ENCODE measurements at regions of chr4 and their contacts with region 1.

Region 1: DNA sequence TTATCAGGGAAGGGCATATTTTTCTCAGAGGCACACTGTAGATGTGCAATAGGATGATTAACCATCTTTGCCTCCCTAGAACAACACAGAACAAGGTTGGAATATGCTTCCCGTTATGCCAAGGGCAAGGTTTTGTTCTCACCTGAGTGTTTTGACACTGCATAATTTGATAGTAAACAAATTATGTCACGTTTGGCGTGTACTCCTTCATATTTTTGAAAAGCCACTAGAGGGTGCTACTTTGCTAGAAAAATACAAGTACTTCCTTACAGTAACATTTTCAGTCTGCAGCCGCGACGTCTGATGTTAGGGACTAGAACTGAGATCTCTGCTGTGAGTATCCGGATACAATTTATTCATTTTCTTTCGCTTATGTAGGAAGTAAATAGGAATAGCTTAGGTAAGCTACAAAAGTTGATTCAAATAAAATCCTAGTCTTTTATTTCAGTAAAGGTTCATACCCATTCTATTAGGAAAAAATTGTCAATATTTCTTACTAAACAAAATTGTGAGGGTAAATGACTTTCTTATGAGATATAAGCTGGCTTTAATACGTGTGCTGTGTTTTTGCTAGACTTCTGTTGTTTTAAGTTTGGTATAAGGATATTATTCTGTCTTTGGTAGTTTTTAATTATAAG is 181.1 kb upstream of the WDFY3 start:
- DNase-seq: peak in 4 of 6 donors; percentile 17 to 53 (median 38)
- ATAC-seq: peak; percentile 89 to 97 (median 96)
- H3K4me3 ChIP-seq: no peak overlapping the region
- H3K27ac ChIP-seq: no peak overlapping the region
- H3K4me1 ChIP-seq: peaks cover 0 to 3% (median 0%) of the 10 kb centered on the region in 3 donors
- H3K27me3 ChIP-seq: no peaks in the 10 kb centered on the region
- CTCF ChIP-seq: peak; percentile 44 to 55 (median 48)

Region 2: GRCh38 chr4:84887824-84888223 is 259.7 kb before region 1 on chr4:
- intact Hi-C with region 1: no loop called
- DNase-seq: no peak
- ATAC-seq: no peak
- H3K4me3 ChIP-seq: no peak overlapping the region
- H3K27ac ChIP-seq: no peak overlapping the region
- H3K4me1 ChIP-seq: no peaks in the 10 kb centered on the region
- H3K27me3 ChIP-seq: no peaks in the 10 kb centered on the region
- CTCF ChIP-seq: no peak

Region 3: GRCh38 chr4:85210359-85210758 is 62.8 kb after region 1 on chr4:
- intact Hi-C with region 1: no loop called
- DNase-seq: no peak
- ATAC-seq: no peak
- H3K4me3 ChIP-seq: no peak overlapping the region
- H3K27ac ChIP-seq: no peak overlapping the region
- H3K4me1 ChIP-seq: no peaks in the 10 kb centered on the region
- H3K27me3 ChIP-seq: no peaks in the 10 kb centered on the region
- CTCF ChIP-seq: no peak

Region 4: DNA sequence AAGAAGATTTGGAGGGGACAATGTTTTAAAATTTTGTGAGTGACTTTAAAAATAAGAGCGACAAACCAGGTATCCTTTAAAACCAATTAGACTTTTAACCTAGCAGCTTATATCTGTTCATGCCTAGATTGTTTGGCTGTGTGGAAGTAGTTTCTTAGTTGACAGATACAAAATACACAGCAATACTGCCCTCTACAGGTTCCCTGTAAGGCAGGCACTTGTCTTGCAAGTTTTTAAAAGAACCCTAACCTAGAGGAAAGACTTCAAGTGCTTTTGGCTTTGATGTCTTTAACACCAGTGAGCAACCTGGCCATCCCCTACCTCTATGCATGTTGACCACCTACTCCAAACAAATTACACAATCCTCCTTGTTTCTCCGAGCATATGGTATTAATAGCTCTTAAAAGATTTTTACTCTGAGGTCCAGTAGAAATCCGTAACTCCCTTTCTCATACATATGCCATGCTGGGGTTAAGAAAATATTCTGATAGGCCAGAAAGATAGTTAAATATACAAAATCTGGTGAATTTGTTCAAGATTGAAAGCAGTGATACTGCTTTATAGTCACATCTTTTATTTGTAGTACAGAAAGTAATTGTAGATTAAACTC is 600.4 kb after region 1 on chr4:
- intact Hi-C with region 1: loop called in 2 of 3 experiments (anchors 5 to 10 kb)
- DNase-seq: peak in 3 of 6 donors; percentile 26 to 51 (median 37)
- ATAC-seq: peak; percentile 69 to 92 (median 90)
- H3K4me3 ChIP-seq: no peak overlapping the region
- H3K27ac ChIP-seq: no peak overlapping the region
- H3K4me1 ChIP-seq: peaks cover 0 to 14% (median 5%) of the 10 kb centered on the region in 3 donors
- H3K27me3 ChIP-seq: no peaks in the 10 kb centered on the region
- CTCF ChIP-seq: peak; percentile 76 to 88 (median 80)

Region 5: DNA sequence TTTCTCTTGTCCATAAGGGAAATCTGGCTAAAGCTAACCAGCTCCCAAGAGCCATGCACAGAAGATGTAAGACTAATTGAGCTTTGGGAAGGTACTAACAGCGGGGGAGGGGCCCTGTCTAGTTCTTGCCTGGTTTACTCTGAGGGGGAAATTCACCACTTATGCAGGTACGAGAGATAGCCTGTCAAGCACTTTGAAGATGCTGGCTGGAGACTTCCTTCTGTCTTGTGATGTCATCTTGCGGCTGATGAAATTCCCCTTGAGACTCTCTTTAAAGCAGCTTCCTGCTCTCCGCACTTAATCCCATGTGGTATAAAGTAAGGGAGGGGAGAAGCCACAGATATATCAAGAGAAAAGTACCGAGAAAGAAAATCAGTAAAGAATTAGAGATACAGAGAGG is 867.0 kb after region 1 on chr4:
- intact Hi-C with region 1: no loop called
- DNase-seq: no peak
- ATAC-seq: no peak
- H3K4me3 ChIP-seq: no peak overlapping the region
- H3K27ac ChIP-seq: no peak overlapping the region
- H3K4me1 ChIP-seq: no peaks in the 10 kb centered on the region
- H3K27me3 ChIP-seq: no peaks in the 10 kb centered on the region
- CTCF ChIP-seq: no peak

Measured in pancreas (tissue), 10 donors.